Activated CD4-positive, alpha-beta T cell treated with anti-CD3 and anti-CD28 coated beads, Interleukin-2, amount 10 ng/mL, durations not matched to agents 24 days and 14 days (primary cell): ENCODE measurements at regions of chr6 and their contacts with region 1.

Region 1: DNA sequence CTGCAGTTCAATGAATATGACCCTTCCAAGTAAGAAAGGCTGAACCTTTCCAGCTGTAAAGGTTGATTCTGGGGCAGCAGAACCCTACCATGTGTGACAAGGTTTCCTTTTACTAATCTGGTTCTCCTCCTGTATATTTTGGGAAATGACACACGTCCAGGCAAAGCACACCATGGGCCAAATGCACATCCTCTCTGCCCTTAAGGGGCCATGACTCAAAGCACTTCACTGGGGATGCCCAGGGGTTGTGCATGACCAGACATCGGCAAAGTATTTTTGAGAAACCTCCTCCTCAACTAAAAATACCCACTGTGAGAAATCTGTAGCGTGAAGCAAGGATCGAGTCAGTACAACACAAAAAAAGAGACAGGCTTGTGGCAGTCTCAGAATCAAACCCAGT is 174.7 kb downstream of the BACH2 start:
- DNase-seq: no peak
- H3K4me3 Mint-ChIP-seq: peak overlapping the region; percentile 40
- H3K27ac Mint-ChIP-seq: peak overlapping the region; percentile 79
- H3K4me1 Mint-ChIP-seq: peaks cover 41% of the 10 kb centered on the region
- H3K27me3 Mint-ChIP-seq: no peaks in the 10 kb centered on the region

Region 2: DNA sequence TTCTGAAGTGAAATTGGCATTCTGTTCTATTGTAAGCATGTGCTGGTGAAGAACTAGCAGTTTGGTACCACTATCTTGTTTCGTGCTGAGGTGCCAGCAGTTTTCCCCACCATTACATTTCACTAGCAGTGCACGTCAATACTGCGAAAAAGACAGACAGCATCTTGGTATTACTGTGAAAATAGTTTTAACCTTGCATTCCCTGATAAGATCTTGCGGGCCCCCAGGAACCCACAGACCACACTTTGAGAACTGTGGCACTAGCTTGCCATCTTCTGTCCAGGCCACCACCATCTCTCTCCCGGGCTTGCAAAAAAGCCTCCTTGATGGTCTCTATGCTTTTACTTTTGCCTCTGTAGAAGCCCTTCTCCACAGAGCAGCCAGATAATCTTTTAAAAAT is 11.0 kb before region 1 on chr6:
- intact Hi-C with region 1: loop called (anchors 1 kb)
- DNase-seq: peak; percentile 90
- H3K4me3 Mint-ChIP-seq: peak overlapping the region; percentile 36
- H3K27ac Mint-ChIP-seq: peak overlapping the region; percentile 63
- H3K4me1 Mint-ChIP-seq: peaks cover 58% of the 10 kb centered on the region
- H3K27me3 Mint-ChIP-seq: no peaks in the 10 kb centered on the region

Region 3: DNA sequence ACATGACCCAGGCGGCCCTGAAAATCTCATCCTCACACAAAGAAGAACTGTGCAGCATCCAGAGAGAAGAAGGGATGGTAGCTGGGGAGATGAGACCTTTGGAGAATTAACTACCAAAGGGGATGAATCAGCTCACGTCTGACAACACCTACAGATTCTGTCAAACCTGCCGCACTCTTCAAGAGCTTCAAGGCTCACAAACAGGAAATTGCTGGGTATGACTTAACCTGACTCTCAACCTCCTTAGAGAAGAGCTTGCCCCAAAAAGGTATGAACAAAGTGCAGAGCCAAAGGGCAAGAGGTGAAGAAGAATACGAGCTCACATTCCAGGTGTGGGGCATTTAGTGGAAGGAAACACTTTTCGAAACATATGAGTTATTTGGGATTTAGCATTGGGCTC is 34.9 kb after region 1 on chr6:
- intact Hi-C with region 1: loop called (anchors 5 kb)
- DNase-seq: peak; percentile 84
- H3K4me3 Mint-ChIP-seq: peak overlapping the region; percentile 62
- H3K27ac Mint-ChIP-seq: peak overlapping the region; percentile 84
- H3K4me1 Mint-ChIP-seq: peaks cover 57% of the 10 kb centered on the region
- H3K27me3 Mint-ChIP-seq: no peaks in the 10 kb centered on the region